AG04450 (cell line): ENCODE measurements at regions of chr12 and their contacts with region 1.

Region 1: GRCh38 chr12:10749700-10750384 is 26.7 kb upstream of the YBX3 start:
- DNase-seq: peak; percentile 86
- H3K4me3 ChIP-seq: peak overlapping the region; percentile 50
- H3K27ac ChIP-seq: no peak overlapping the region
- H3K27me3 ChIP-seq: no peaks in the 10 kb centered on the region
- CTCF ChIP-seq: peak; percentile 96

Region 2: DNA sequence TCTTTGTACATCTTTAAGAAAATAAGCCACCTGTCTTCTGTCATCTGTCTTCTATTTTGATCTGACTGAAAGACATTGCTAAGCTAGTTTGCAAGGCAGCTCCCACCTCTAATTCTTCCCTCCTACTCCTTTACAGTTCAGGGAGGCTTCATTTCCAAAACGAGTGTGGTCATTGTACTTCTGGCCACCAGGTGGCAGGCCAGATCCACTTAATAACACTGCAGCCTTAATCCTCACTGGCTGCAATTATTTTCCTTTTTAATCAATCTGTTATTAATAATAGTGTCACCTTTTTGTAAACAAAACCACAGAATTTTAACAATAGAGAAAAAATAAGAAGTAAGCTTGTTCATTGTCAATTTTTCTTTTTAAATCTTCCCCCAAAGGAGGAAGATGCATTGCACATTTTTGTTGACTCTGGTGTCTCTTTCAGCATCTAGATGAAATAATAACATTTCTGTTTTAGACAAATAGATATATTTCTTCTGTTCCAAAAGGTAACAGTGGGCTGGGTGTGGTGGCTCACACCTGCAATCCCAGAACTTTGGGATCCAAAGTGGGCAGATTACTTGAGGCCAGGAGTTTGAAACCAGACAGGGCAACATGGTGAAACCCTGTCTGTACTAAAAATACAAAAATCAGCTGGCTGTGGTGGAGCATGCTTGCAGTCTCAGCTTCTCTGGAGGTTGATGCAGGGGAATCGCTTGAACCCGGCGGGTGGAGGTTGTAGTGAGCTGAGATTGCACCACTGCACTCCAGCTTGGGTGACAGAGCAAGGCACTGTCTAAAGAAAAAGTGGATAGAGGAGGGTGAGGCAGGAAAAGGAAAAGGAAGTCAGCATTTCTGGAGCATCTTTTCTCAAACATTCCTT is 513.8 kb before region 1 on chr12:
- CTCF ChIA-PET with region 1: interaction called, 26 read pairs
- POLR2A ChIA-PET with region 1: no interaction called
- DNase-seq: no peak
- H3K4me3 ChIP-seq: no peak overlapping the region
- H3K27ac ChIP-seq: no peak overlapping the region
- H3K27me3 ChIP-seq: no peaks in the 10 kb centered on the region
- CTCF ChIP-seq: peak; percentile 83

Region 3: DNA sequence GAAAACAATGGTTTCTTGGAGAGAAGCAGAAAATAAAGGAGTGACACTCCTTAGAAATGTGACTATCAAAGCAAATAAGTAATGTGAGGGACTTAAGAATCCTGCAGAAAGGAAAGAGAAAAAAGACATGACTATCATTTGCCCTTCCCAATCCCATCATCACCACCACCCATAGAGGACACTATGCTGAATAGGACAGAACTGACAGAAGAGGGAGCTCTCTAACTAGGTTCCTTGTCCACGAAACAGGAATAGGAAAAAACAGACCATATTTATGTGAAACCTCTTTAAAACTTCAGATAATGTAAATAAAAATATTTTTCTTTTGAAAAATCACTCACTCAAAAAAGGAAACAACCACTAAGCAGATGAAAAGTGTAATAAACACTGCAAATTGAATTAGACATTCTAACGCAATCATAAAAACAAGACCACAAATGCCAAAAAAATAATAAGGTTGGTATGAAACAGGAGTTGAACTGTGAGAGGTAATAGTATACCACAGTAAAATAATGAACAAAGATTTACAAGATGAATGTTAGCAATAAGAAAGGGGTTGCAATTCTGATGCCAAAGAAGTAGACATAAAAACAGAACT is 418.1 kb before region 1 on chr12:
- CTCF ChIA-PET with region 1: interaction called, 28 read pairs
- POLR2A ChIA-PET with region 1: no interaction called
- DNase-seq: peak; percentile 16
- H3K4me3 ChIP-seq: no peak overlapping the region
- H3K27ac ChIP-seq: no peak overlapping the region
- H3K27me3 ChIP-seq: no peaks in the 10 kb centered on the region
- CTCF ChIP-seq: peak; percentile 89

Region 4: DNA sequence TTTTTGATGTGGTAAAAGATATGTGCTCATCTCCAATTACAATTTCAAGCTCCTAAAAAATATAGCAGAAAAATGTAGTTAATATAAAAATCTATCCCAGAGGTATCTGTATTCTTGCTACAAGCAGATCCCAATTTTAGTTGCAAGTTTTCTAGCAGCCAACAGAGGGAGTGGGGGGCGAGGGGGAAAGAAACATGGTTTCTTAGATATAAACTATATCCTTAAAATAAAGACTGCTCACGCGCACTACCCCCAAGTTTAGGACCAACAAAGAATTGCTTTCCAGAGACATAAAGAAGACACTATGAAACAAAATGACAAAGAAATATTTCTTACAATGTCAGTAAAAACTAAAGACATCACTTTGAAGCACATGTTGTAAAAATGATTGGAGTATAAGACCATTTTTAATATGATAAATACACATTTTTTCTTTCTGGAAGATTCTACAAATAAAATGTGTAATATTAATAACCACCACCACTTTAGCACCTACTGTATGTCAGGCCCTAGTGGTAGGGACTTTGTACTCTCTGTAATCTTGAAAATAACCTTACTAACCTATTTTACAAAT is 141.9 kb before region 1 on chr12:
- CTCF ChIA-PET with region 1: interaction called, 24 read pairs
- POLR2A ChIA-PET with region 1: no interaction called
- DNase-seq: no peak
- H3K4me3 ChIP-seq: no peak overlapping the region
- H3K27ac ChIP-seq: no peak overlapping the region
- H3K27me3 ChIP-seq: no peaks in the 10 kb centered on the region
- CTCF ChIP-seq: peak; percentile 54

Region 5: GRCh38 chr12:10701131-10701681 is 48.6 kb before region 1 on chr12:
- CTCF ChIA-PET with region 1: interaction called, 12 read pairs
- POLR2A ChIA-PET with region 1: no interaction called
- DNase-seq: no peak
- H3K4me3 ChIP-seq: no peak overlapping the region
- H3K27ac ChIP-seq: no peak overlapping the region
- H3K27me3 ChIP-seq: no peaks in the 10 kb centered on the region
- CTCF ChIP-seq: no peak

Region 6: DNA sequence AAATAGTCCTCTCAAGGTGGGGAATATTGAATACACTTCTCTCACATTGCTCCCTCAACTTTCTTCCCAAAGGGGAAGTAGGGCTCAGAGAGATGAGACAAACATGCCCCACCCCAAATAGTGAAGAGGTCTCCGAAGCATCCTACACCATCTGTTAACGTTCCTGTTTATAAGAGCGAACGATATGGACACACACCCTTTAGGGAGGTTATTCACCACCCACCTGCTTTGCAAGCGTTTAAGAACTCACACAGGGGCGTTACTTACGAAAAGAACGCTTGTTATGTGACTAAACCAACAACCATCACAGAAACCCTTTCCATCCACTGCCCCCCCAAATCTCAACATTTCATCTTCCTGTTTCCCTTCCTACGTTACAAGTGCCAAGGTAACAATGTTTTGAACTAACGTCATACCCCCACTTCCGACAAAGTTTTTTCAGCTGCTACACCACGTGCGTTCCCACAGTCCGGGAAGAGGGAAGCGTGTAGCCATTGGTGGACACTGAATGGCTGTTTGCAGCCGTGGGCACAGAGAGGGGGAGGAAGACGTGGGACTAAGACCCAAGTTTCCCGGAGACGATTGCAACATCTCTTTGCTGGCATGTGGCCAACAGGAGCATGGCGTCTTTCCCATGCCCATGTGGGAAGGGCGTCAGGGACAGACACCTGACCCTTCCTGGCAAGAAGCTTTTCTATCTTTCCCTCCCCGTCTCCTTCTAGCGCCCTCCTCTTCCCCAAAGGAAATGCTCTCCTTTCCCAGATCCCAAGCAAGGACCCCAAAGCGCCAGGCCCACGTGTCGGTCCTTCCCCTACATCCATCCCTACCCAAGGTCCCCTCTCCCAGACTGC is 28.0 kb before region 1 on chr12:
- CTCF ChIA-PET with region 1: interaction called, 36 read pairs
- POLR2A ChIA-PET with region 1: interaction called, 3 read pairs
- DNase-seq: peak; percentile 95
- H3K4me3 ChIP-seq: peak overlapping the region; percentile 91
- H3K27ac ChIP-seq: peak overlapping the region; percentile 98
- H3K27me3 ChIP-seq: no peaks in the 10 kb centered on the region
- CTCF ChIP-seq: no peak

Region 7: DNA sequence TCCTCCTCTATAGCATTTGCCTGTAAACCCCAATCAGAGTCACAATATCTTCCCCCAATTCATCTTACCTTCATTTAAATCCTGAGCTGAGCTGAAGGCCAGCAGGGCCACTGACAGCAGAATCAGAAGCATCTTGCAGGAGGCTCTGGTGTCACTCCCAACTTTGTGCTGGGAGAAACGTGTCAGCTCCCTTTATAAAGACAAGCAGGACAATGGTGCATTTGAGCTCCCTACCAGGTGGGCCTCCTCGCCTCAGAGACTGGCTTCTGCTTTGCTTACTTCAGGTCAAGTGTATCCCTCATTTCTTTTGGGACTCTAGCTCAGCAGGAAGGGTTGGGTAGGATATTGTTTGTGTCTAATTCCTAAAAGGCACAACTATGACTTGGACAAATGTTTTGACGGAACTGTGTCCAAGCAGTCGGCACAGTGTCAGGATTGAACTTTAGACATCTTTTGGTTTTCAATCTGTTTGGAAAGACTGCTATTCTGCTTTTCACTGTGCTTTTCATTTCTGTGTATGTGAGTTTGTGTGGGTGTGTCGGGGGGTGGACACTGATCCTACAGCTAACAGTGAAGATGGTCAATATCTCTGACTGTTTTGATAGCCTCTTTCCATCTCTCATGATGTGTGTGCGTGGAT is 134.4 kb after region 1 on chr12 and contains the start of gene PRH1:
- CTCF ChIA-PET with region 1: no interaction called
- POLR2A ChIA-PET with region 1: no interaction called
- DNase-seq: no peak
- H3K4me3 ChIP-seq: no peak within 1 kb of the TSS
- H3K27ac ChIP-seq: no peak within 1 kb of the TSS
- H3K27me3 ChIP-seq: no peaks in the 10 kb centered on the region
- CTCF ChIP-seq: no peak
- polyA plus RNA-seq, gene PRH1: 3.1 and 4.2 TPM in 2 replicates

Region 8: DNA sequence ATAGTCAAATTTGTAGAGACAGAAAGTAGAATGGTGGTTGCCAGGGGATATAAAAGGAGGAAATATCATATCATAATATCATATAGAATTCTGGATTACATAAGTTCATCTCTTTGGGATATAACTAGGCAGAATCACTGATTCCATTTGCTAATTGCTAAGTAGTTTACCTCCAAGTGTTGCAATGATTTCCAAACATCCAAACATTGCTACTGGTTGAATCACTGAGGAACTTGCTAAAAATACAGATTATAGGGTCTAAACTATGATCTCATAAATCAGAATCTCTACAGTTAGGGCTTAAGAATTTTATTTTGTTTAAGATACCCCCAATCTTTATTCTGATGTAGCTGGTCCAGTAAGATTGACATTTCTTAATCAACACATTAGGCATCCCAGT is 453.0 kb after region 1 on chr12:
- CTCF ChIA-PET with region 1: interaction called, 15 read pairs
- POLR2A ChIA-PET with region 1: no interaction called
- DNase-seq: no peak
- H3K4me3 ChIP-seq: no peak overlapping the region
- H3K27ac ChIP-seq: no peak overlapping the region
- H3K27me3 ChIP-seq: no peaks in the 10 kb centered on the region
- CTCF ChIP-seq: no peak